Activated naive CD4-positive, alpha-beta T cell treated with anti-CD3 and anti-CD28 coated beads for 36 hours (primary cell): ENCODE measurements at regions of chr5 and their contacts with region 1.

Region 1: DNA sequence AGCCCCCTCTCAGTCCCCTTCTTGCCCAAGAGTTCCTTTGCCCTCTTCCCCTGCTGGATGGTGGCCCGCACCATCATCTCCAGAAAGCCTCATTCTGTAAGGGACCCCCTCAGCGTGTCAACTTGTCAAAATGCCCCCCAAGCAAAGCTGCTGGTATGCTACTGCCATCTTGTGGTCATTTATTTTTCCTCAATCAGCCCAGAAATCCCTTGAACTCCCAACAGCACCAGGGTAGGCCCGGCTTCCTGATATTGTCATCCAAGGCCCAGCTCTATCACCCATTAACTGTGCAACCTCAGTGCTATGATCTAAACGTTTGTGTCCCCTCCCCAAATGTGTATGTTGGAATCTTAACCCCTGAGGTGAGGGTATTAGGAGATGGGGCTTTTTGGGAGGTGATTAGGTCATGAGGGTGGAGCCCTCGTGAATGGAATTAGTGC is 53.2 kb upstream of the FBXW11 start:
- DNase-seq: no peak
- H3K4me3 Mint-ChIP-seq: no peak overlapping the region
- H3K27ac Mint-ChIP-seq: no peak overlapping the region
- H3K4me1 Mint-ChIP-seq: peaks cover 7% of the 10 kb centered on the region
- H3K27me3 Mint-ChIP-seq: no peaks in the 10 kb centered on the region

Region 2: GRCh38 chr5:171989276-171989675 is 70.4 kb before region 1 on chr5:
- CTCF ChIA-PET with region 1: no interaction called
- intact Hi-C with region 1: no loop called
- DNase-seq: peak; percentile 64
- H3K4me3 Mint-ChIP-seq: no peak overlapping the region
- H3K27ac Mint-ChIP-seq: peak overlapping the region; percentile 63
- H3K4me1 Mint-ChIP-seq: peaks cover 62% of the 10 kb centered on the region
- H3K27me3 Mint-ChIP-seq: no peaks in the 10 kb centered on the region

Region 3: DNA sequence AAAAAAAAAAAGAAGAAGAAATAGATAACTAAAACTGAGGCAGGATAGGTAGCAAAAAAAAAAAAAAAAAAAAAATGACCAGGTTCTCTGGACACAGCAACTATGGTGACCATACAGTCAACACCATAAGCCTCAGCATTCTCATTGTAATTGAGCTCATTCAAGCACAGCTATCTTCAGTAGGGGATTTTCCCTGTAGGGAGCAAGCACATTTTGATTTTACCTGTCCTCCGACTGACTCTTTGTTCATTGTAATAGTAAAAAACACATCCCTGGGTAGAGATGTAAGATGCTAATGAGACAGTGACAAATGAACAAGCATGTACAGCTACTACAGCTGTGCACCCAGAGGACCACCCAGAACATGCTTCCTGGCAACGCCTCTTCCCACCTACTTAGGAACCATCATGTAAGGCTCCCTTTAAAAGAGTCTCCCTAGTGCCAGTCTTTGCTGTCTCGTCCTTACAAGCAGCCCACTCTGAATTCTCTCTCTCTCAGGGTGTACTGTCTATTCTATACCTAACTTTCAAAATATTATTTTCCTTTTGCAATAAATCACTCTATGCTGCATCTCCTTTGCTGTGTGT is 11.7 kb after region 1 on chr5:
- CTCF ChIA-PET with region 1: interaction called, 11 read pairs
- intact Hi-C with region 1: no loop called
- DNase-seq: no peak
- H3K4me3 Mint-ChIP-seq: no peak overlapping the region
- H3K27ac Mint-ChIP-seq: peak overlapping the region; percentile 4
- H3K4me1 Mint-ChIP-seq: peaks cover 46% of the 10 kb centered on the region
- H3K27me3 Mint-ChIP-seq: no peaks in the 10 kb centered on the region

Region 4: DNA sequence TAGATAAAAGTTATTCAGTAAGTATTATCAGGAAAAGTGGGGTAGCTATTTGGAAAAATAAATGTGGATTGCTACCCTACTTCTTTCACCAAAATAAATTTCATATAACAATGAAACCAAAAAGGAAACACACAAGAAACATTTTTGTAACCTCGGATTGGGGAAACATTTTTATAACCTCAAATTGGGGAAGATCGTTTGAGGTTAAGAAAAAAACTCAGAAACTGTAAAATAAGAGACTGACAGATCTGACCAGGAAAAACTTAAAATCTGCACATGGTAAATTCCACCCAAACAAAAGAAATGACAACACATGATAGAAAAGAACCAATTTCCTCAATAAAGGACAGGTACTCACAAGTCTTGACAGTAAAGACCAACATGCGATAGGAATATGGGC is 147.8 kb after region 1 on chr5:
- CTCF ChIA-PET with region 1: no interaction called
- intact Hi-C with region 1: no loop called
- DNase-seq: no peak
- H3K4me3 Mint-ChIP-seq: no peak overlapping the region
- H3K27ac Mint-ChIP-seq: no peak overlapping the region
- H3K4me1 Mint-ChIP-seq: no peaks in the 10 kb centered on the region
- H3K27me3 Mint-ChIP-seq: no peaks in the 10 kb centered on the region

Region 5: GRCh38 chr5:172443441-172444109 is 383.9 kb after region 1 on chr5:
- CTCF ChIA-PET with region 1: no interaction called
- intact Hi-C with region 1: loop called (anchors 10 kb)
- DNase-seq: peak; percentile 82
- H3K4me3 Mint-ChIP-seq: no peak overlapping the region
- H3K27ac Mint-ChIP-seq: no peak overlapping the region
- H3K4me1 Mint-ChIP-seq: peaks cover 12% of the 10 kb centered on the region
- H3K27me3 Mint-ChIP-seq: peaks cover 11% of the 10 kb centered on the region